K562 (cell line): ENCODE measurements at regions of chr3 and their contacts with region 1.

Region 1: DNA sequence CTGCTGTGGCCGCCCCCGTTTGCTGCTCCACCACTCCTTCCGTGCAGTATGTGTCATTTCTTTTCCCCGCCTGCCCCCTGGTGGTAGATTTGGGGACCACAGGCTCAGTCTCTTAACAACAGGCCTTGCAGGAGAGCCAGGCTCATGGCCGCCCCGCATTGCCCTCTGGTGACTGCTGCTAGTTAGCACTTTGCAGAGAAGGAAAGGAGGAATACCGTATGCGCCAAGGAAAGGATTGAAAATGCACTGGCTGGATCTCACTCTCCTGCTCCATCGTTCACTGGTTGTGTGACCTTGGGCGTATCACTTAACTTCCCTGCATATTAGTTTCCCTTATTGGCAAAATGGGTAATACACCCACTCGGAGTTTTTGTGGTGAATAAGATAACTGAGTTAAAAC is 39.3 kb upstream of the PXYLP1 start:
- DNase-seq: peak; percentile 79 to 94 (median 86)
- ATAC-seq: peak; percentile 100
- H3K4me3 ChIP-seq: no peak overlapping the region
- H3K27ac ChIP-seq: no peak overlapping the region
- H3K4me1 ChIP-seq: no peaks in the 10 kb centered on the region
- H3K27me3 ChIP-seq: peaks cover 17 to 32% of the 10 kb centered on the region in 2 experiments; a peak in 4 of 5 replicates
- CTCF ChIP-seq: peak; percentile 99 to 100 (median 99)
- EP300 ChIP-seq: no peak
- POLR2A ChIP-seq: no peak
- RAD21 ChIP-seq: peak; percentile 97 to 99

Region 2: GRCh38 chr3:139388077-139388476 is 1804.3 kb before region 1 on chr3:
- CTCF ChIA-PET with region 1: interaction called, 10 read pairs
- POLR2A ChIA-PET with region 1: no interaction called
- in situ Hi-C with region 1: no loop called
- intact Hi-C with region 1: no loop called
- DNase-seq: peak in 1 of 4 experiments; percentile 31
- ATAC-seq: peak; percentile 6; the same call in 1 of the 3 replicates
- H3K4me3 ChIP-seq: peak overlapping the region; percentile 92
- H3K27ac ChIP-seq: 0 out of 3 replicates have a peak overlapping the region, but pooled peaks have one; percentile 0
- H3K4me1 ChIP-seq: peaks cover 4 to 9% of the 10 kb centered on the region in 2 experiments; a peak in 2 of 5 replicates
- H3K27me3 ChIP-seq: no peaks in the 10 kb centered on the region
- CTCF ChIP-seq: no peak
- EP300 ChIP-seq: no peak
- POLR2A ChIP-seq: no peak
- RAD21 ChIP-seq: no peak

Region 3: GRCh38 chr3:140910860-140911259 is 281.5 kb before region 1 on chr3:
- CTCF ChIA-PET with region 1: no interaction called
- POLR2A ChIA-PET with region 1: no interaction called
- in situ Hi-C with region 1: loop called (anchors 10 kb)
- intact Hi-C with region 1: no loop called
- DNase-seq: peak; percentile 27 to 38 (median 30)
- ATAC-seq: peak; percentile 90
- H3K4me3 ChIP-seq: peak overlapping the region; percentile 27
- H3K27ac ChIP-seq: no peak overlapping the region
- H3K4me1 ChIP-seq: no peaks in the 10 kb centered on the region
- H3K27me3 ChIP-seq: peaks cover 0 to 8% of the 10 kb centered on the region in 2 experiments; a peak in 2 of 5 replicates
- CTCF ChIP-seq: peak in 2 of 3 experiments; percentile 31 to 33; a peak in 2 of 6 replicates
- EP300 ChIP-seq: no peak
- POLR2A ChIP-seq: no peak
- RAD21 ChIP-seq: no peak

Region 4: DNA sequence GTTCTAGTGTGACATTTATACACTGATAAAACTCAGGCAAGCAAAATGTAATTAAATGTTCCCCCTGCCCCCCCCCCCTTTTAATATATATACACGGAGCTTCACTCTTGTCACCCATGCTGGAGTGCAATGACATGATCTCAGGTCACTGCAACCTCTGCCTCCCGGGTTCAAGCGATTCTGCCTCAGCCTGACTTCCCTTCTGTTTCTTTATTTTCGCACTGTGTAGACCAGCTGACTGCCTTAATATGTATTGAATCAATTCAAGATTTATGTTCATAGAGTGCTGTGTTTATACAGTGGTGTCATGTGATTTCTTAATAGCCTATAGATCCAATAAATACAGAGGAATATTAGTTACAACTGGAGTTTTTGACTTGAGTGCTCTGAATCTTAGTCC is 211.7 kb before region 1 on chr3:
- CTCF ChIA-PET with region 1: no interaction called
- POLR2A ChIA-PET with region 1: no interaction called
- in situ Hi-C with region 1: no loop called
- intact Hi-C with region 1: no loop called
- DNase-seq: no peak
- ATAC-seq: no peak
- H3K4me3 ChIP-seq: no peak overlapping the region
- H3K27ac ChIP-seq: no peak overlapping the region
- H3K4me1 ChIP-seq: no peaks in the 10 kb centered on the region
- H3K27me3 ChIP-seq: no peaks in the 10 kb centered on the region
- CTCF ChIP-seq: no peak
- EP300 ChIP-seq: no peak
- POLR2A ChIP-seq: no peak
- RAD21 ChIP-seq: no peak

Region 5: GRCh38 chr3:141011232-141011996 is 180.9 kb before region 1 on chr3:
- CTCF ChIA-PET with region 1: interaction called, 7 read pairs
- POLR2A ChIA-PET with region 1: no interaction called
- in situ Hi-C with region 1: loop called (anchors 25 kb)
- intact Hi-C with region 1: loop called (anchors 1 kb)
- DNase-seq: peak; percentile 49 to 80 (median 60)
- ATAC-seq: peak; percentile 99
- H3K4me3 ChIP-seq: no peak overlapping the region
- H3K27ac ChIP-seq: no peak overlapping the region
- H3K4me1 ChIP-seq: peaks cover 0 to 4% of the 10 kb centered on the region in 2 experiments; a peak in 1 of 5 replicates
- H3K27me3 ChIP-seq: peaks cover 9 to 29% of the 10 kb centered on the region in 2 experiments
- CTCF ChIP-seq: peak; percentile 86 to 95 (median 87)
- EP300 ChIP-seq: no peak
- POLR2A ChIP-seq: no peak
- RAD21 ChIP-seq: peak; percentile 59 to 79

Region 6: DNA sequence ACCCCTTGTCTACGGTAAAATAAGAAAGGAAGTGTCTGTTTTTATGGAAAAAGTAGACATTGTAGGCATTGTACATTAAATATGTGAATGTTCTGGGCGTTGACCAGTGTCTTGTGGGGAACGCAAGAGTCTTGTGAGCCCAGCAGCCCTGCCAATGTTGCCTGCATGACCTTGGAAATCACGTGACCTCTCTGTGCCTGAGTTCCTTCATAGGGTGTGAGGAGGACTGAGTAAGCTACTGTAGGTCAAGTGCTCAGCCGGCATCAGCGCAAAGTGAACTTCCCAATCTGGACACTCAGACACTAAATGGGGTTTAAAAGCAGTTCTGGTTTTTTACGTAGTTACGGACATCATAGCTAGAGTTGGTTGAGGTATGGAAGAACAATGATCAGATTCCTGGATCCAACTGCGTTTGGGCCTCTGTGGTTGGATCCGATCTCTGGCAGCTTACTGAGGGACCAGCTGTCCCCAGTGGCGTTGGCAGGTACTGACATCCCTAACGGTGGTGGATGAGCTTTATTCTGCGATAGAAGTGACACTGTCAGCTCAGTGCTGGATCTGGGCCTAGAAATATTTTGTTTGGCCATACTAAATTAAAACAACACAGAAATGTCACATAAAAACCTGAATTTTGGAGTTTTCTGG is 77.4 kb before region 1 on chr3:
- CTCF ChIA-PET with region 1: no interaction called
- POLR2A ChIA-PET with region 1: interaction called, 3 read pairs
- in situ Hi-C with region 1: no loop called
- intact Hi-C with region 1: loop called (anchors 5 kb)
- DNase-seq: peak; percentile 21 to 56 (median 45)
- ATAC-seq: peak; percentile 96
- H3K4me3 ChIP-seq: no peak overlapping the region
- H3K27ac ChIP-seq: no peak overlapping the region
- H3K4me1 ChIP-seq: no peaks in the 10 kb centered on the region
- H3K27me3 ChIP-seq: peaks cover 4 to 14% of the 10 kb centered on the region in 2 experiments
- CTCF ChIP-seq: peak; percentile 41 to 63 (median 55); a peak in 5 of 6 replicates
- EP300 ChIP-seq: no peak
- POLR2A ChIP-seq: no peak
- RAD21 ChIP-seq: 0 out of 4 replicates have a peak, but pooled peaks of 1 of the 2 experiments have one; percentile 26